ENCODE measurements at regions of chr11 and their contacts with region 1.

Region 1: GRCh38 chr11:29333993-29334775 is 682.6 kb downstream of the KCNA4 start:
- DNase-seq: peak; percentile 31
- ATAC-seq: peak; percentile 87
- H3K4me3 ChIP-seq: no peak overlapping the region
- H3K27ac ChIP-seq: no peak overlapping the region
- H3K4me1 ChIP-seq: no peaks in the 10 kb centered on the region
- H3K27me3 ChIP-seq: no peaks in the 10 kb centered on the region; a peak in 1 of 4 replicates
- CTCF ChIP-seq: peak; percentile 37 to 66 (median 46); a peak in 5 of 6 replicates
- EP300 ChIP-seq: peak; percentile 80 to 81; a peak in 2 of 4 replicates
- POLR2A ChIP-seq: no peak
- RAD21 ChIP-seq: peak; percentile 71

Region 2: DNA sequence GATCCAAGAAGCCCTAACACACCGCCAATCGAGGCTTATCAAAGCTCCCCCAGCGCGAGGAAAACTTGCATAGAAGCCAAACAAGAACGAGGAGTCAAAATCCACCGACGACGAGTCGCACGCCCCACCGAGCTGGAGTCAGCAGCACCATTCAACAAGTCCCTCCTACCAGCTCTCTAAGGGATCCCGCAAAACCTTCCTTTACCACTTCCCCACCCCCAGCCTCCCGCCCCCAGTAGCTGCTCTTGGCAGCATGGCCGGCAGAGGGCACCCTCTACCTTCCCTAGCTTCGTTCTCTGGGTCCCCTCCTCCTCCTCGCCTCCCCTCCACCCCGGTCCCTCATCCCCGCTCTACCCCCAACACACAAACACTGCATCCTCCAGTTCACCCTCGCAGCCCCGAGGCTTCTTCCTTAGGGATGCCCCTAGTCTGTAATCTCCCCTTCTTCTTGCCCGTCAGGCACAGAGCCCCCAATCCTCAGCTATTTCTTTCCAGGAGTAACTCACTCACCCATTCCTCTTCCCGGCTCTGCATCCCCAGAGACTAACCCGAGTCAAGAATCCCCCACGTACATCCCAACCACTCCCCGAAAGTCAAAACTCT is 1635.2 kb before region 1 on chr11:
- CTCF ChIA-PET with region 1: interaction called, 33 read pairs
- POLR2A ChIA-PET with region 1: no interaction called
- RAD21 ChIA-PET with region 1: interaction called, 43 read pairs
- SMC1A ChIA-PET with region 1: interaction called, 19 read pairs
- in situ Hi-C with region 1: loop called (anchors 5 kb)
- intact Hi-C with region 1: loop called (anchors 1 kb)
- DNase-seq: peak; percentile 23
- ATAC-seq: peak; percentile 88
- H3K4me3 ChIP-seq: no peak overlapping the region
- H3K27ac ChIP-seq: no peak overlapping the region
- H3K4me1 ChIP-seq: no peaks in the 10 kb centered on the region; the same call in 1 of the 2 replicates
- H3K27me3 ChIP-seq: peaks cover 6 to 22% of the 10 kb centered on the region in 2 experiments
- CTCF ChIP-seq: peak; percentile 55 to 96 (median 86)
- EP300 ChIP-seq: no peak
- POLR2A ChIP-seq: no peak
- RAD21 ChIP-seq: peak; percentile 89

Region 3: GRCh38 chr11:28296426-28296825 is 1037.8 kb before region 1 on chr11:
- CTCF ChIA-PET with region 1: no interaction called
- POLR2A ChIA-PET with region 1: no interaction called
- RAD21 ChIA-PET with region 1: no interaction called
- SMC1A ChIA-PET with region 1: no interaction called
- in situ Hi-C with region 1: no loop called
- intact Hi-C with region 1: no loop called
- DNase-seq: peak; percentile 8
- ATAC-seq: peak; percentile 90
- H3K4me3 ChIP-seq: no peak overlapping the region
- H3K27ac ChIP-seq: no peak overlapping the region
- H3K4me1 ChIP-seq: peaks cover 12% of the 10 kb centered on the region
- H3K27me3 ChIP-seq: no peaks in the 10 kb centered on the region
- CTCF ChIP-seq: no peak
- EP300 ChIP-seq: no peak
- POLR2A ChIP-seq: no peak
- RAD21 ChIP-seq: no peak

Region 4: DNA sequence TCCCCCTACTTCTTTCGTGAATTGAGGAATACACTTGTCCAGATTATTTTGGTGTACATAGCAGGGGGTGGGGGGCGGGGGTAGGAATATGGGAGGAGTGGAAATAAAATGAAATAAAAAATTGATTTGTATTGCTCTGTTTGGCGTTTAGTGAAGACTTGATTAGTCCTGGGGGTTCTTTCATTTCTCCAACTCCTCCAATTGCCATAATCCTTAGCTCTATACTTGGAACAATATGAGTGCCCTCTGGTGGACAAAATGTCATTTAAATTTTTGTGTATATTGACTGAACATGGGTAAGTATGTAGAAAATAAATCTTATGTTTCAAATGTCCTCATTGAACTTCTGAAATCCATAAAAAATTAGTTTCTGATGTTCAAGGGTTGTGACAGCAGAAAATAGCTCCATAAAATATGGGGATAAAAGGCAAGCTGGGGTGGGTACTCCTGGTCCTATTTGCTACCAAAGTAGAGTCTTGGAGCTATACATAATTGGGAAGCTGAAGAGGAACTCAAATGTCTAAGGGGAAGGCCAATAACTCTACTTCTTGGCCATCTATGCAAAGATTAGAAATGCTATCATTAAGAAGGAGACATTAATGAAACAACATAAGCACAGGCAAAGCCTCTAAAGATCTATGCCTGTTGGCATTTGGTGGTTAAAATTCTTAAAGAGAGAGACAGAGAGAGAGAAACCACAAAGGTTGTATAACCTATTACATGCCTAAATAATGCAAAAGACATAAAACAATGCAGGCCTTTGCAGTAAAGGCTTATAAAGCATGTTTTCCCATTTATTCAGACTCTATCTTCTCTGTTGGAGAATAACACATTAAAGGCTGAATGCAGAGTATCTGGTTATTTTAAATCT is 804.4 kb before region 1 on chr11:
- CTCF ChIA-PET with region 1: interaction called, 6 read pairs
- POLR2A ChIA-PET with region 1: no interaction called
- RAD21 ChIA-PET with region 1: interaction called, 6 read pairs
- SMC1A ChIA-PET with region 1: no interaction called
- in situ Hi-C with region 1: no loop called
- intact Hi-C with region 1: loop called (anchors 10 kb)
- DNase-seq: no peak
- ATAC-seq: peak; percentile 70
- H3K4me3 ChIP-seq: no peak overlapping the region
- H3K27ac ChIP-seq: no peak overlapping the region
- H3K4me1 ChIP-seq: no peaks in the 10 kb centered on the region
- H3K27me3 ChIP-seq: no peaks in the 10 kb centered on the region
- CTCF ChIP-seq: peak; percentile 21 to 46 (median 28); a peak in 4 of 6 replicates
- EP300 ChIP-seq: no peak
- POLR2A ChIP-seq: no peak
- RAD21 ChIP-seq: peak; percentile 62

Region 5: GRCh38 chr11:28976801-28977145 is 357.4 kb before region 1 on chr11:
- CTCF ChIA-PET with region 1: no interaction called
- POLR2A ChIA-PET with region 1: no interaction called
- RAD21 ChIA-PET with region 1: no interaction called
- SMC1A ChIA-PET with region 1: no interaction called
- in situ Hi-C with region 1: no loop called
- intact Hi-C with region 1: no loop called
- DNase-seq: no peak
- ATAC-seq: no peak
- H3K4me3 ChIP-seq: no peak overlapping the region
- H3K27ac ChIP-seq: no peak overlapping the region
- H3K4me1 ChIP-seq: no peaks in the 10 kb centered on the region
- H3K27me3 ChIP-seq: no peaks in the 10 kb centered on the region
- CTCF ChIP-seq: no peak
- EP300 ChIP-seq: no peak
- POLR2A ChIP-seq: no peak
- RAD21 ChIP-seq: no peak

Region 6: GRCh38 chr11:29159552-29160465 is 174.4 kb before region 1 on chr11:
- CTCF ChIA-PET with region 1: interaction called, 86 read pairs
- POLR2A ChIA-PET with region 1: no interaction called
- RAD21 ChIA-PET with region 1: interaction called, 25 read pairs
- SMC1A ChIA-PET with region 1: interaction called, 47 read pairs
- in situ Hi-C with region 1: no loop called
- intact Hi-C with region 1: loop called (anchors 2 kb)
- DNase-seq: no peak
- ATAC-seq: peak; percentile 98
- H3K4me3 ChIP-seq: no peak overlapping the region
- H3K27ac ChIP-seq: no peak overlapping the region
- H3K4me1 ChIP-seq: no peaks in the 10 kb centered on the region
- H3K27me3 ChIP-seq: no peaks in the 10 kb centered on the region
- CTCF ChIP-seq: peak; percentile 38 to 64 (median 52); a peak in 5 of 6 replicates
- EP300 ChIP-seq: no peak
- POLR2A ChIP-seq: no peak
- RAD21 ChIP-seq: peak; percentile 72

Region 7: DNA sequence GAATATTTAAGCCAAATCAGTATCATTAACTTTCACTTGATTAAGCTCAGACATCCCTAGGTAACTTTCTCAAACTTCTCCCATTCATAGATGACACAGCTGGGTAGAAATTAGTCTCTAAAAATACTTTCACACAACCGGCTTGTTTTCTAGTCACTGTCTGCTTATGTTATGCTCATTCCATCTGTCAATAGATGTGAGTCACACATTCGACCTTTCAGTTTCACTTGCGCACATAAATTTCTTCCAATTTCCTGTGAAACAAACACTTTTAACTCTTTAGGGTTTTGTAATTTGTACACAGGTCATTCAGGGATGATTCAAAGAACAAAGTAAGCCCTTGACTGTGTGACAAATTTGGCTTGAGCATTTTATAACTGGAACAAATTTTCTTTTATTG is 40.4 kb before region 1 on chr11:
- CTCF ChIA-PET with region 1: interaction called, 45 read pairs
- POLR2A ChIA-PET with region 1: no interaction called
- RAD21 ChIA-PET with region 1: interaction called, 17 read pairs
- SMC1A ChIA-PET with region 1: interaction called, 24 read pairs
- in situ Hi-C with region 1: no loop called
- intact Hi-C with region 1: loop called (anchors 2 kb)
- DNase-seq: peak; percentile 45
- ATAC-seq: peak; percentile 96
- H3K4me3 ChIP-seq: no peak overlapping the region
- H3K27ac ChIP-seq: no peak overlapping the region
- H3K4me1 ChIP-seq: no peaks in the 10 kb centered on the region
- H3K27me3 ChIP-seq: no peaks in the 10 kb centered on the region
- CTCF ChIP-seq: no peak
- EP300 ChIP-seq: peak; percentile 98 to 99
- POLR2A ChIP-seq: no peak
- RAD21 ChIP-seq: no peak

Region 8: GRCh38 chr11:29361369-29361768 is 27.2 kb after region 1 on chr11:
- CTCF ChIA-PET with region 1: no interaction called
- POLR2A ChIA-PET with region 1: no interaction called
- RAD21 ChIA-PET with region 1: no interaction called
- SMC1A ChIA-PET with region 1: no interaction called
- in situ Hi-C with region 1: no loop called
- intact Hi-C with region 1: no loop called
- DNase-seq: no peak
- ATAC-seq: no peak
- H3K4me3 ChIP-seq: no peak overlapping the region
- H3K27ac ChIP-seq: no peak overlapping the region
- H3K4me1 ChIP-seq: no peaks in the 10 kb centered on the region
- H3K27me3 ChIP-seq: no peaks in the 10 kb centered on the region
- CTCF ChIP-seq: no peak
- EP300 ChIP-seq: no peak
- POLR2A ChIP-seq: no peak
- RAD21 ChIP-seq: no peak

Region 9: DNA sequence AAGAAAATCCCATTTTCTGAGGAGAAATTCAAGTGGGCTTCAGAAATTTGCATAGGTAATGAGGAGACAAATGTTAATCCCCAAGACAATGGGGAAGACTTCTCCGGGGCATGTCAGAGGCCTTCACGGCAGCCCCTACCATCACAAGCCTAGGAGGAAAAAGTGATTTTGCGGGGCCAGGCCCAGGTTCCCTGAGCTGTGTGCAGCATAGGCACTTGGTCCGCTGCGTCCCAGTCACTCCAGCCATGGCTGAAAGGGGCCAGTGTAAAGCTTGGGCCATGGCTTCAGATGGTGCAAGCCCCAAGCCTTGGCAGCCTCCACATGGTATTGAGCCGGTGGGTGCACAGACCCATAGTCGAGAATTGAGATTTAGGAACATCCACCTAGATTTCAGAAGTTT is 111.9 kb after region 1 on chr11:
- CTCF ChIA-PET with region 1: no interaction called
- POLR2A ChIA-PET with region 1: no interaction called
- RAD21 ChIA-PET with region 1: no interaction called
- SMC1A ChIA-PET with region 1: no interaction called
- in situ Hi-C with region 1: no loop called
- intact Hi-C with region 1: no loop called
- DNase-seq: no peak
- ATAC-seq: no peak
- H3K4me3 ChIP-seq: no peak overlapping the region
- H3K27ac ChIP-seq: no peak overlapping the region
- H3K4me1 ChIP-seq: no peaks in the 10 kb centered on the region
- H3K27me3 ChIP-seq: no peaks in the 10 kb centered on the region
- CTCF ChIP-seq: no peak
- EP300 ChIP-seq: no peak
- POLR2A ChIP-seq: no peak
- RAD21 ChIP-seq: no peak

Region 10: GRCh38 chr11:30322826-30323710 is 988.9 kb after region 1 on chr11 and contains the start of gene ARL14EP:
- CTCF ChIA-PET with region 1: no interaction called
- POLR2A ChIA-PET with region 1: no interaction called
- RAD21 ChIA-PET with region 1: no interaction called
- SMC1A ChIA-PET with region 1: no interaction called
- in situ Hi-C with region 1: no loop called
- intact Hi-C with region 1: loop called (anchors 10 kb)
- DNase-seq: peak; percentile 82
- ATAC-seq: peak; percentile 91
- H3K4me3 ChIP-seq: peak within 1 kb of the TSS; percentile 100
- H3K27ac ChIP-seq: peak within 1 kb of the TSS; percentile 92
- H3K4me1 ChIP-seq: peaks cover 2% of the 10 kb centered on the region; the same call in 1 of the 2 replicates
- H3K27me3 ChIP-seq: no peaks in the 10 kb centered on the region
- CTCF ChIP-seq: no peak
- EP300 ChIP-seq: peak in 1 of 2 experiments; percentile 20; a peak in 1 of 4 replicates
- POLR2A ChIP-seq: peak; percentile 99
- RAD21 ChIP-seq: 0 out of 2 replicates have a peak, but pooled peaks have one; percentile 1
- polyA plus RNA-seq, gene ARL14EP: 41.3 to 56.7 TPM